A673 (cell line): ENCODE measurements at regions of chr12 and their contacts with region 1.

Region 1: GRCh38 chr12:47527816-47528215 is 178.0 kb downstream of the RPAP3 start:
- DNase-seq: peak; percentile 12
- H3K4me3 ChIP-seq: no peak overlapping the region
- H3K27ac ChIP-seq: no peak overlapping the region
- H3K4me1 ChIP-seq: no peaks in the 10 kb centered on the region
- H3K27me3 ChIP-seq: no peaks in the 10 kb centered on the region
- CTCF ChIP-seq: no peak

Region 2: DNA sequence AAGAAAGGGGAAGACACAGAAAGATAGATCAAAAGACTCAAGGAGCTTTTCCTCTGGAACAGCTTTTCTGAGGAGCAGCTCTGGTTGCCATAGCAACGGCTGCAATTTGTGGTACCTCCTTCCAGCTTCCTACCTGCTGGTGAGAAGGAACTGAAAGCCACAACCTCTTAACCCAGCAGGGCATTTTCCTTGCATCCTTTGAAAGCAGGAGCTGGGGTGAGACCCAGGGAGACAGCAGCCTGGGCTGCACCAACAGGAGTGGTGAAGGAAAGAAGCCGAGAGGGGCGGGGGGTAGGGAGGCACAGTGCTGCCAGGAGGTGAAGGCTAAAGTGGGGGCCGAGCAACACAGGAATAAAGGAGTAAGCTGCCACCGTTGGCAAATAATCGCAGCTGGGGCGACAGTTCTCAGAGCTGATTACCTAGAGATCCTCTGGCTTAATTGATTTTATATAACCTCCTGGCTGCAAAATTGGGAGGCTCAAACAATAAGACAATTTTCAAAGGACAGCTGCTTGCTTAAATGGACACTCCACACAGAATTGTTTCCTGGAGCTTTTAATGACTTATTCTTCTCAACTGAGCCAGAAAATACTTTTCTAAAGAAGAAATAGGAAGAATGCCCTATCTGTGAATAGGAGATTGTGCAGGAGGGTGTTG is 48.6 kb after region 1 on chr12:
- CTCF ChIA-PET with region 1: no interaction called
- POLR2A ChIA-PET with region 1: interaction called, 13 read pairs
- intact Hi-C with region 1: no loop called
- DNase-seq: no peak
- H3K4me3 ChIP-seq: no peak overlapping the region
- H3K27ac ChIP-seq: no peak overlapping the region
- H3K4me1 ChIP-seq: no peaks in the 10 kb centered on the region
- H3K27me3 ChIP-seq: no peaks in the 10 kb centered on the region
- CTCF ChIP-seq: no peak

Region 3: DNA sequence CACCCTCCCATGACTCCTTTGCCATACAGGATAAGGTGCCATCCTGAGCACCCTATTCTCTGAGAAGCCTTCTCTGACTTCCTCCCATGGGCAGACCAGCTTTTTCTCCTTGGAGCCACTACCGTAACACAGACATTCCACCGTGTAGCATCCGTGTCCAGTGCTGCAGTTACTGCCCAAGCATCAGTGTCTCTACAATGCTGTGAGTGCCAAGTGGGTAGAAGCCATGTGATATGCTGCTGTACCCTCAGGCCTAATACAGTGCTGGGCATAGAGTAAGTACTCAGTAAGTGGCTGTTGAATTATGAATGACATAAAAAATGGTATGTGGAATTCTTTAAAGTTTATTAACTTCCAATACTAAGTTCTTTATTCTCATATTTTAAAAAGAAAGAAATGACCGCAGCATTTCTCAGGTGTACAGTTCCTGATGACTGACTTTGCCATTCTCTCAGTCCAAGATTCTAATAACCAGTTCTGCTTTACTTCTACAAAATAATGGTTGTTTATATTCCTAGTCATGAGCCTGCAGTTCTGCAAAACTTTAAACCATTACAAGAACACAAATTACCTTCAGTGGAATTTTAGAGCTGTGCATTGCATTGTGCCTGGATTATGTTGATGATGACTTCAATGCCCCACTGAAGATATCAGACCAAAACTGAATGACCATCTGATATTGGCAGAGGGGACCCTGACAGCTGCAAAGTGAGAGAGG is 59.3 kb after region 1 on chr12:
- CTCF ChIA-PET with region 1: no interaction called
- POLR2A ChIA-PET with region 1: no interaction called
- intact Hi-C with region 1: no loop called
- DNase-seq: no peak
- H3K4me3 ChIP-seq: no peak overlapping the region
- H3K27ac ChIP-seq: no peak overlapping the region
- H3K4me1 ChIP-seq: peaks cover 40% of the 10 kb centered on the region
- H3K27me3 ChIP-seq: no peaks in the 10 kb centered on the region
- CTCF ChIP-seq: no peak

Region 4: DNA sequence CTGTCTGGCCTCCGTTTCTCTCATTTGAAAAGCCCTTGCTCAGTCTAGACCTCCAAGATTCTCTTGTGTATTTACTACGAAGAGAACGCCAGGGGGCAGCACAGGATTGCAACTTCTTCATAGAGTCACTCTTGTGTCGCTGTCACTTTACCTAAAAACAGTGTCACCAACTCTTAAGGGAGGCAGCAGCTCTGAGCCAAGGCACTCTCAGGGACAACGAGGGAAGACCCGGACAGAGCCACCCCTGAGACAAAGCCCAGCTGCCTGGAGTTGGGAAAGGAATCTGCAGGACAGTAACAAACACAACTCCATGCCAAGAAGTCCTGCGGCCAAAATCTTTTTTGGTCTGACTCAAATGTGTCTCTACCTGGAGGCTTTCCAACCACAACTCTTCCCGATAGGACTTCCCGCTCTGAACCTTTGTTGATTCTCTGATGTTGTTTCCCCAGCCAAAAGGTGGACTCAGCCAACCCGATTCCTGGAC is 187.6 kb after region 1 on chr12:
- CTCF ChIA-PET with region 1: no interaction called
- POLR2A ChIA-PET with region 1: no interaction called
- intact Hi-C with region 1: no loop called
- DNase-seq: peak; percentile 89
- H3K4me3 ChIP-seq: no peak overlapping the region
- H3K27ac ChIP-seq: no peak overlapping the region
- H3K4me1 ChIP-seq: peaks cover 11% of the 10 kb centered on the region
- H3K27me3 ChIP-seq: no peaks in the 10 kb centered on the region
- CTCF ChIP-seq: peak; percentile 81